PC-9 (cell line): ENCODE measurements at regions of chr4 and their contacts with region 1.

Region 1: DNA sequence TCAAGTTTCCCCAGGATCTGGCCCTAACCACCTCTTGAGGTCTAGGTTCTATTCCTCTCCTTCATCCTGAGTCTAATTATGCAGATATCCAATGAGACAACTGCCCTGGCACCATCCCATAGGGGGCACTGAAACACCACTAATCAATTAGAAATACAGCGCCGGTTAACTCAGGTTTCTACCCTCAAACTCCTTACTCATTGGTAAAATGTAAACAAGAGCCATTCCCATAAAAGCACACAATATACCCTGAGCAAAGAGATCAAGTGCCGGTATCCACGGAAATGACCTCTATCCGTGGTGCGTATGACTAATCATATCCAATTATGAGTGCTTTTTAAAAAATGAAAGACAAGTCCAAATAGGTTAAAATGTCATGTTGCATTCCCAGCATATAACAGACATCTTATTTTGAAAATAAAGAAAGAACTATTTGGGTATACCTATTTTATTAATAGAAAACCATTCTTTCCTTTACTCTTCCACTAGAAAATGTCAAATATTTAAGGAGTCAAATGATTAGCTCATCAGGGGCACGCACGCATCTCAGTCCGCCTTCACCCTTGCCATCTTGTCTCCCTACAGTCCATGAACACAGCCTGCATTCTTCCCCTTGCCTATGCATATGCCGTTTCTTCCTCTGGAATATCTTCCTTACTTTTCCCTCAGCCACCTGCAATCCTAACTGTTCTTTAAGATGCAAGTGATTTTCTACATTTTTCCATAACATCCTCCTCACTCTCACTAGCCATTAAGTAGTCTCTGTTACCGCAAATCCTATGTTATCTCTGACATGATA is 141.1 kb downstream of the MAML3 start:
- DNase-seq: peak; percentile 74 to 91
- H3K4me3 ChIP-seq: no peak overlapping the region
- H3K27ac ChIP-seq: peak overlapping the region; percentile 74
- H3K4me1 ChIP-seq: peaks cover 30% of the 10 kb centered on the region
- H3K27me3 ChIP-seq: no peaks in the 10 kb centered on the region
- CTCF ChIP-seq: peak; percentile 79

Region 2: GRCh38 chr4:140049024-140049848 is 36.3 kb after region 1 on chr4:
- CTCF ChIA-PET with region 1: interaction called, 3 read pairs
- POLR2A ChIA-PET with region 1: no interaction called
- intact Hi-C with region 1: loop called (anchors 1 kb)
- DNase-seq: peak; percentile 59 to 62
- H3K4me3 ChIP-seq: peak overlapping the region; percentile 56
- H3K27ac ChIP-seq: peak overlapping the region; percentile 96
- H3K4me1 ChIP-seq: peaks cover 62% of the 10 kb centered on the region
- H3K27me3 ChIP-seq: no peaks in the 10 kb centered on the region
- CTCF ChIP-seq: no peak

Region 3: DNA sequence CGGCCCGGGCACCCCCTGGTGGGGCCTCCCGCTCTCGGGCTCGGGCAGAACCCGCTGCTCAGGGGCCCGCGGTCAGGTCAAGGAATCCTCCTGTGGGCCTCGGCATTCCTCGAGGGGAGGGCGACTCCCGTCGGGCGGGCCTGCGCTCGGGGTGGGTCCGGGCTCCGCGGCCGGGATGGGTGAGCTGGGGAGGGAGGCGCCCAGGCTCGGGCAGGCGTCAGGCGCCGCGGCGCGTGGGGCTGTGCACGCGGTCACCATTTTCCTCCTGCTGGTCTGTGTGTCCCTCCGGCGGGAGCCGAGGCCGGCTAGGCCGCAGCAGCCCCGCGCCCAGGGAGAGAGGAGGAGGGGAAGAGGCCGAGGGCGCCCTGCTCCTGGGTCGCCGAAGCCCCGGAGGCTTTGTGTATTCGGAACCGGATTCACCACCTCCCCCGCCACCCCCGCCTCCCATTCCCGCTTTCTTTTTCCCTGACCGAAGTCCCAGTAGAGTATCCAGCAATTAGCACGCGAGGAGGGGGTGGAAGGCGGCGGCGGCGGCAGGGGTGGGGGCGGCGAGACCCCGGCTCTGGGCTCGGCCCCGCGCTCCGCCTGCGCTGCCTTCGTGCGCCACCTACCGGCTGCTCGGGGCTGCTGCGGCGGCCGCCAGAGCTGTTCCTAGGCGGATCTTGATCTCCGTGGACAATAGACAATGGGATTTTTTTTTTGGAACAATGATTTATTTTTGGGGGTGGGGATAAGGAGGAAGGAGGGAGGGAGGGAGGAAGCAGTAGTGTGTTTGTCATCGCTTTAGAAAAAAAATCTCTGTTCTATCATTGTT is 240.1 kb after region 1 on chr4:
- CTCF ChIA-PET with region 1: no interaction called
- POLR2A ChIA-PET with region 1: no interaction called
- intact Hi-C with region 1: loop called (anchors 1 kb)
- DNase-seq: peak; percentile 40 to 76
- H3K4me3 ChIP-seq: peak overlapping the region; percentile 59
- H3K27ac ChIP-seq: peak overlapping the region; percentile 73
- H3K4me1 ChIP-seq: peaks cover 69% of the 10 kb centered on the region
- H3K27me3 ChIP-seq: no peaks in the 10 kb centered on the region
- CTCF ChIP-seq: peak; percentile 84

Region 4: GRCh38 chr4:140326395-140326993 is 313.6 kb after region 1 on chr4:
- CTCF ChIA-PET with region 1: no interaction called
- POLR2A ChIA-PET with region 1: no interaction called
- intact Hi-C with region 1: loop called (anchors 1 kb)
- DNase-seq: peak in 1 of 2 experiments; percentile 25
- H3K4me3 ChIP-seq: no peak overlapping the region
- H3K27ac ChIP-seq: no peak overlapping the region
- H3K4me1 ChIP-seq: no peaks in the 10 kb centered on the region
- H3K27me3 ChIP-seq: no peaks in the 10 kb centered on the region
- CTCF ChIP-seq: peak; percentile 55